ENCODE measurements at regions of chr7 and their contacts with region 1.

Region 1: GRCh38 chr7:92833024-92833765 is 3.2 kb downstream of the CDK6 start:
- DNase-seq: peak; percentile 74
- ATAC-seq: peak; percentile 3
- H3K4me3 ChIP-seq: peak overlapping the region; percentile 98
- H3K27ac ChIP-seq: peak overlapping the region; percentile 98
- H3K4me1 ChIP-seq: peaks cover 6% of the 10 kb centered on the region; the same call in 1 of the 2 replicates
- H3K27me3 ChIP-seq: no peaks in the 10 kb centered on the region
- CTCF ChIP-seq: peak; percentile 58
- POLR2A ChIP-seq: peak; percentile 32; the same call in 1 of the 2 replicates
- RAD21 ChIP-seq: peak; percentile 71

Region 2: DNA sequence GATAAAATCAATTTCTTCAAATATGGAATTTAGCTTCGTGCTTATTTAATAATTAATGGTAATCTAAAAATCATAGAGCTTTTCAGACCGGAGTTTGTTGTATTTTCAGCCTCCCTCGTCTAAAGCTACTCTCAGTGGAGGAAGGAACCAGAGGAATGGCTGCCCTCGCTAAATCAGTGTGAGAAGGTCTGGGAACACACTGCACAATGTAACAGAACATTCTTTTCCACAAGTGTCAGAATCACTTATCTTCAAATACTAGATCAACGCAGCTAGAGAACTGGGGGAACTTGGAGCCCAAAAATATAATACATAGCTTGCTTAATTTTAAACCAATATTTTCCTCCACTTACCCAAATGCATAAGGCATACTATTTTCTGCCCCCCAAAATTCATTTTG is 1101.2 kb before region 1 on chr7:
- CTCF ChIA-PET with region 1: no interaction called
- POLR2A ChIA-PET with region 1: no interaction called
- dilution Hi-C with region 1: no loop called
- in situ Hi-C with region 1: no loop called
- intact Hi-C with region 1: no loop called
- DNase-seq: no peak
- ATAC-seq: no peak
- H3K4me3 ChIP-seq: no peak overlapping the region
- H3K27ac ChIP-seq: no peak overlapping the region
- H3K4me1 ChIP-seq: no peaks in the 10 kb centered on the region
- H3K27me3 ChIP-seq: no peaks in the 10 kb centered on the region
- CTCF ChIP-seq: no peak
- POLR2A ChIP-seq: no peak
- RAD21 ChIP-seq: no peak

Region 3: DNA sequence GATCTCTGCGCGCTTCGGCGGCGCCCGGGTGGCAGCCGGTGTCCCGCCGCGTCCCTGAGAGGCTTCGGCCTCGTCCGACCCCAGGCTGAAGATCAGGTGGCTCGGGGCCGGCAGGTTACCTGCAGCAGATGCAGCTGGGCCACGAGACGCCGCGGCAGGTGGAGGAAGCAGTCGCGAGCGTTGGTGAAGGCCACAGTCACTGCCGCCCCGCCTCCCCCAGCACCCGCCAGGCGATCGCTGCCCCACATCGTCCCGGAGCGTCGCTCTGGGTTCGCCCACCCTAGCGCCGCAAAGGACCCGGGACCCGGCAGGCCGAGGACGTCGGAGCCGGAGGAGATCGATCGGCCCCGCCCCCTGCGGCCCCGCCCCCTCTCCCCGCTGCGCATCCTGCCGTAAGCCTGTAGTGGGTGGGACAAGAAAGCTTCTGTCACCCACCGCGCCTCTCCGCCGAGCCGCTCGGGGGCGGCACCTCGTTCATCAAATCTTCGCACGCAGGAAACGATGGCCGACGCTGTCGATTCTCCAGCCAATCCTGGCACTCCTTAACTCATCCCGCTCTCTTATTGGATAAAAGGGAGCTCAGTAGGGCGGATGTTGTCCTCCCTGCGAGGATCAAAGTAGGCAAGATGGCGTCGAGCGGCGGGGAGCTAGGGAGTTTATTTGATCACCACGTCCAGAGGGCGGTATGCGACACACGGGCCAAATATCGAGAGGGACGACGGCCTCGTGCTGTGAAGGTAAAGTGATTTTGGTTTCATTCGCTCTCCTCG is 304.8 kb before region 1 on chr7 and contains the starts of genes PEX1 and RBM48:
- CTCF ChIA-PET with region 1: no interaction called
- POLR2A ChIA-PET with region 1: interaction called, 14 read pairs
- dilution Hi-C with region 1: no loop called
- in situ Hi-C with region 1: no loop called
- intact Hi-C with region 1: loop called (anchors 1 kb)
- DNase-seq: peak; percentile 99
- ATAC-seq: peak; percentile 97
- H3K4me3 ChIP-seq: peak within 1 kb of the TSS; percentile 95
- H3K27ac ChIP-seq: peak within 1 kb of the TSS; percentile 92
- H3K4me1 ChIP-seq: peaks cover 2% of the 10 kb centered on the region; the same call in 1 of the 2 replicates
- H3K27me3 ChIP-seq: no peaks in the 10 kb centered on the region
- CTCF ChIP-seq: peak; percentile 49
- POLR2A ChIP-seq: peak; percentile 89
- RAD21 ChIP-seq: peak; percentile 1; the same call in 1 of the 2 replicates
- total RNA-seq, gene PEX1: 12.7 and 13.9 TPM in 2 replicates
- total RNA-seq, gene RBM48: 5.6 and 10.6 TPM in 2 replicates

Region 4: DNA sequence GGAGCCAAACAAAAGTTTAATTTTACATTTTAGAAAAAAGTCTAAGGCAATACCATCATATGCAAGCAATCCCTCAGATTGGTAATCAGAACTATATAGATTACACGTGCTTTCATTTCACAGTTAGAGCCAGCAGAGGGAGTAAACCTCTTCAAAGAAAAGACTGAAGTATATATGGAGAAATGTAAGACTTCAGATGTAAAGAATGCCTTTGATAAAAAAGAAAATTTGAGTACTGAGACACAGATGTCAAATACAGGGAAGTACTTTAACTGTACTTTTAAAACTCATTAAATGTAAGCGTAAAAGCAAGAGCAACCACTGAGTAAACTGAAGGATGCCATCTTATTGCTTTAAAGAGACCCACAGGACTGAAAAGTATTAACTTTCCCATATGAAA is 141.6 kb before region 1 on chr7:
- CTCF ChIA-PET with region 1: no interaction called
- POLR2A ChIA-PET with region 1: no interaction called
- dilution Hi-C with region 1: no loop called
- in situ Hi-C with region 1: loop called (anchors 5 kb)
- intact Hi-C with region 1: loop called (anchors 1 kb)
- DNase-seq: peak; percentile 76
- ATAC-seq: peak; percentile 30; the same call in 1 of the 2 replicates
- H3K4me3 ChIP-seq: no peak overlapping the region
- H3K27ac ChIP-seq: peak overlapping the region; percentile 36
- H3K4me1 ChIP-seq: peaks cover 2% of the 10 kb centered on the region; the same call in 1 of the 2 replicates
- H3K27me3 ChIP-seq: no peaks in the 10 kb centered on the region
- CTCF ChIP-seq: peak; percentile 61
- POLR2A ChIP-seq: no peak
- RAD21 ChIP-seq: peak; percentile 65

Region 5: GRCh38 chr7:92768501-92769393 is 64.4 kb before region 1 on chr7:
- CTCF ChIA-PET with region 1: interaction called, 3 read pairs
- POLR2A ChIA-PET with region 1: no interaction called
- dilution Hi-C with region 1: no loop called
- in situ Hi-C with region 1: no loop called
- intact Hi-C with region 1: loop called (anchors 5 kb)
- DNase-seq: peak; percentile 64
- ATAC-seq: no peak
- H3K4me3 ChIP-seq: no peak overlapping the region
- H3K27ac ChIP-seq: no peak overlapping the region; the same call in 1 of the 2 replicates
- H3K4me1 ChIP-seq: peaks cover 26% of the 10 kb centered on the region
- H3K27me3 ChIP-seq: no peaks in the 10 kb centered on the region
- CTCF ChIP-seq: no peak
- POLR2A ChIP-seq: no peak
- RAD21 ChIP-seq: no peak

Region 6: GRCh38 chr7:92811158-92811557 is 22.0 kb before region 1 on chr7:
- CTCF ChIA-PET with region 1: no interaction called
- POLR2A ChIA-PET with region 1: no interaction called
- dilution Hi-C with region 1: no loop called
- in situ Hi-C with region 1: no loop called
- intact Hi-C with region 1: no loop called
- DNase-seq: no peak
- ATAC-seq: no peak
- H3K4me3 ChIP-seq: no peak overlapping the region
- H3K27ac ChIP-seq: no peak overlapping the region
- H3K4me1 ChIP-seq: peaks cover 7% of the 10 kb centered on the region
- H3K27me3 ChIP-seq: no peaks in the 10 kb centered on the region
- CTCF ChIP-seq: no peak
- POLR2A ChIP-seq: no peak
- RAD21 ChIP-seq: no peak

Region 7: DNA sequence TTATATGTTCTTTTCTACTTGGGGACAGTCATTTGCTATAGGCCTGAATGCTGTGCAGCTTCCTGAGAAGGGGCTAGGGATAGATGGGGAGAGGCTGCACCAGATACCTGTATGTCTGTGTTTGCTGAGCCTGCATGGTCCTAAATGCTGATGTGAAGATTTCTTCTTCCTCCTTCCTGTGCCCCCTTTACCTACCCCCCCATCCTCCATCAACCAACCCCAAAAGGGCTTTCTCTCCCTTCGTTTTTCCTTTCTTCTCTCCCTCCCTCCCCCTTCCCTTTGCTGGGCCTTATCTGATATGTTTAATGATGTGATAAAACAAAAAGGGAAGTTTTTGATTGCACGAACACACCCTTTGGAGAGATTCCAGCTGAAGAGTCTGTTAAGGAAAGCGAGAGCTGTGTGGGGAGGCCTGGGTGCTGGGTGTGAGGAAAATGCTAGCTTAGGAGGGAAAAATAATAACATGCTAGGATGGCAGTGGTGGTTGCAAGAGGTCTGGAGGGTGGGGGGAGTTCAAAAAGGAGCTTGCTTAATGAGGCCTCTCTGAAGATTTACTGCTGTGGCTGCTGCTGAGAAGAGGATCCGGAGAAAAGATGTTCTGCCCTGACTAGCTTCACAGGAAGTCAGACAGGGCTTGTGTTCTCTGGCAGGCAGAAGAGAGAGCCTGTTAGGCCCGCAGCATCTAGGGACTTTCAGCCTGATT is 182.7 kb after region 1 on chr7:
- CTCF ChIA-PET with region 1: no interaction called
- POLR2A ChIA-PET with region 1: interaction called, 5 read pairs
- dilution Hi-C with region 1: no loop called
- in situ Hi-C with region 1: no loop called
- intact Hi-C with region 1: loop called (anchors 1 kb)
- DNase-seq: peak; percentile 45
- ATAC-seq: 0 out of 2 replicates have a peak, but pooled peaks have one; percentile 3
- H3K4me3 ChIP-seq: no peak overlapping the region
- H3K27ac ChIP-seq: peak overlapping the region; percentile 93
- H3K4me1 ChIP-seq: peaks cover 39% of the 10 kb centered on the region
- H3K27me3 ChIP-seq: no peaks in the 10 kb centered on the region
- CTCF ChIP-seq: no peak
- POLR2A ChIP-seq: no peak
- RAD21 ChIP-seq: no peak

Region 8: DNA sequence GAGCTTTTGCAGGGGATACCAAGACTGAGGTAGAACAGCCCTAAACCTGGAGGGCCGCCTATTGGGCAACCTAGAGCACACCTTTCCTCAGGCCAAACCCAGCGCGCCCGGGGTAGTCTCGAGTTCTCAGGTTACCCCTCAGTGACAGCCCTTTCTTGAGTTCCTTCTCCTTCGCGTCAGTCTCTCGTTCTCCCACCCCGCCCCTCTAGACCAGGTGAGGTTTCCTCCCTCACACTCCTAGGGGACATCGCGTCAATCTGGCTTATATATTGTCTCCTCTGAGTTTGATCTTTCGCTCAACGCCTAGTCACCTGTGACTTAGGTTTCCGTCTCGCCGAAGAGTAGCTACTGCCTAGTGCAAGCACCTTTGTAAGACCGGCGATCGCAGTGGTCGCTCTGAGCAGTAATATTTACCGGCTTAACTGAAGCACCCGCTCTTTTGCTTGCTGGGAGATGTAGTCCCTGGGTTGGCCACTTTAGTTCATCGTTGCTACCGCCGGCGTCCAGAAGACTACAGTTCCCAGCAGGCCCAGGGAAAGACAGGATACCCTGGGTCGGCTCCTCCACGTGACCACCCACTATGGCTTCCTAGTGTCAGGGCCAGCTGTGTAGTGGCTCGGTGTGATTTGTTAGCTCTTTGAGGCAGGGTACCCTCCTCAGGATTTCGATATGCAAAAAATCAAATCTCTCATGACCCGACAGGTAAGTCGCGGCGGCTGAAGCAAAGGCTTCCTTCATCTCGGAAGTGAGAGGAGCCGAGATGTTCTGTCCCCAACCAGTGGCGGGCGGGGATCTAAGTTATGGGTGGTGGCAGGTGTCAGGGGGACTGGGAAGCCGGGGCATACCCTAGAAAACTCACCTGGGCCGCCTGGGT is 398.8 kb after region 1 on chr7 and contains the start of gene VPS50:
- CTCF ChIA-PET with region 1: no interaction called
- POLR2A ChIA-PET with region 1: no interaction called
- dilution Hi-C with region 1: no loop called
- in situ Hi-C with region 1: no loop called
- intact Hi-C with region 1: loop called (anchors 5 kb)
- DNase-seq: peak; percentile 93
- ATAC-seq: peak; percentile 100
- H3K4me3 ChIP-seq: peak within 1 kb of the TSS; percentile 80
- H3K27ac ChIP-seq: peak within 1 kb of the TSS; percentile 64
- H3K4me1 ChIP-seq: no peaks in the 10 kb centered on the region
- H3K27me3 ChIP-seq: peaks cover under 1% of the 10 kb centered on the region; the same call in 1 of the 2 replicates
- CTCF ChIP-seq: no peak
- POLR2A ChIP-seq: no peak
- RAD21 ChIP-seq: no peak
- total RNA-seq, gene VPS50: 22.0 and 26.7 TPM in 2 replicates

Measured in IMR-90 (cell line).